PC-3 (cell line): ENCODE measurements at regions of chr7 and their contacts with region 1.

Region 1: GRCh38 chr7:116809636-116810266 is 52.6 kb upstream of the CAPZA2 start:
- DNase-seq: peak; percentile 87
- ATAC-seq: peak; percentile 82
- H3K4me3 ChIP-seq: peak overlapping the region; percentile 42
- H3K27ac ChIP-seq: peak overlapping the region; percentile 76
- H3K4me1 ChIP-seq: peaks cover 38% of the 10 kb centered on the region
- H3K27me3 ChIP-seq: no peaks in the 10 kb centered on the region
- CTCF ChIP-seq: peak; percentile 85

Region 2: GRCh38 chr7:116195451-116195850 is 614.3 kb before region 1 on chr7:
- CTCF ChIA-PET with region 1: no interaction called
- POLR2A ChIA-PET with region 1: no interaction called
- intact Hi-C with region 1: no loop called
- DNase-seq: no peak
- ATAC-seq: no peak
- H3K4me3 ChIP-seq: no peak overlapping the region
- H3K27ac ChIP-seq: no peak overlapping the region
- H3K4me1 ChIP-seq: no peaks in the 10 kb centered on the region
- H3K27me3 ChIP-seq: no peaks in the 10 kb centered on the region
- CTCF ChIP-seq: no peak

Region 3: DNA sequence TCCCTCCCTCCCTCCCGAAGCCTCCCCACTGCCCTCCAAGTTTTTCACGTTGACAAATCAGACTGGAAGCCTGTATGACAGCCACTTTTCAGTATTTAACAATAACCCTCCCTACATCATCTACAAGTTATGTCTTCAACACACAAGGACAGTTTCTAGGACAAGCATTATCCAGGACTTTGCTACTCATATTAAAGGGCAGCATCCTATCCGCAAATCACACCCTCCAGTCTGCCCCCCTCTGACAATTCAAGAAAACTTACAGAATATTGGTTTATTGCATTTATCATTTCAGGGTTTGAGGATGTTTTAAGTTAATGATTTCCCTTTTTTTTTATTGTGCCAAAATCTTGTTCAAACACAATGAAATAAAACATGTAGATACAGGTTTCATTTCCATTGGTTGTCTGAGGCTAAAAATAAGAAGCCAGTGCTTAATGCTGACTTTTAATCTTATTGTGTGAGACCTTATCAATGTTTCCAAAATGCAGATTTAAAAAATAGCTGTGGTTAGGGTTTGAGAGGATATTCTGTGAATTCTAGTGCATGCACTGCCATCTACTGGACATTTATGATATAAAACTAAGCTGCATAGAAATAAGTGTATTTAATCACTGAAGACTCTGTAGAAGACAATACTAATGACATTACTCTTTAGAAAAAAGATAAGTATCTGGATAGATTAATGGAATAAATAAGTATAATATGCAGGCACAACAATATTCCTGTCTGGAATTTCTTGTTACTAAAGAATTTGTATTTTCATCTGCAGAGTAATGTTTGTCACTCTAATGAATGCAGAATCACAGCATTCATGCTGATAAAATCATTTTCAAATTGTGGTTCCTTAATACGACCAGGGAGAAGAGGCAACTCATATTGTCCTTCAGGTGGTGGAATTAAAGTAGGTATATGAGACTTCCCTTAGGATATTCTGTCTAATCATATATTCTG is 220.8 kb before region 1 on chr7:
- CTCF ChIA-PET with region 1: interaction called, 9 read pairs
- POLR2A ChIA-PET with region 1: no interaction called
- intact Hi-C with region 1: loop called (anchors 1 kb)
- DNase-seq: peak; percentile 88
- ATAC-seq: peak; percentile 49
- H3K4me3 ChIP-seq: no peak overlapping the region
- H3K27ac ChIP-seq: peak overlapping the region; percentile 3; the same call in 1 of the 2 replicates
- H3K4me1 ChIP-seq: peaks cover 26% of the 10 kb centered on the region
- H3K27me3 ChIP-seq: no peaks in the 10 kb centered on the region
- CTCF ChIP-seq: peak; percentile 87

Region 4: GRCh38 chr7:116862234-116862950 is 52.6 kb after region 1 on chr7 and contains the start of gene CAPZA2:
- CTCF ChIA-PET with region 1: no interaction called
- POLR2A ChIA-PET with region 1: no interaction called
- intact Hi-C with region 1: loop called (anchors 1 kb)
- DNase-seq: peak; percentile 94
- ATAC-seq: peak; percentile 89
- H3K4me3 ChIP-seq: peak within 1 kb of the TSS; percentile 88
- H3K27ac ChIP-seq: peak within 1 kb of the TSS; percentile 63
- H3K4me1 ChIP-seq: peaks cover 16% of the 10 kb centered on the region
- H3K27me3 ChIP-seq: no peaks in the 10 kb centered on the region
- CTCF ChIP-seq: no peak
- total RNA-seq, gene CAPZA2: 27.7 and 57.7 TPM in 2 replicates

Region 5: DNA sequence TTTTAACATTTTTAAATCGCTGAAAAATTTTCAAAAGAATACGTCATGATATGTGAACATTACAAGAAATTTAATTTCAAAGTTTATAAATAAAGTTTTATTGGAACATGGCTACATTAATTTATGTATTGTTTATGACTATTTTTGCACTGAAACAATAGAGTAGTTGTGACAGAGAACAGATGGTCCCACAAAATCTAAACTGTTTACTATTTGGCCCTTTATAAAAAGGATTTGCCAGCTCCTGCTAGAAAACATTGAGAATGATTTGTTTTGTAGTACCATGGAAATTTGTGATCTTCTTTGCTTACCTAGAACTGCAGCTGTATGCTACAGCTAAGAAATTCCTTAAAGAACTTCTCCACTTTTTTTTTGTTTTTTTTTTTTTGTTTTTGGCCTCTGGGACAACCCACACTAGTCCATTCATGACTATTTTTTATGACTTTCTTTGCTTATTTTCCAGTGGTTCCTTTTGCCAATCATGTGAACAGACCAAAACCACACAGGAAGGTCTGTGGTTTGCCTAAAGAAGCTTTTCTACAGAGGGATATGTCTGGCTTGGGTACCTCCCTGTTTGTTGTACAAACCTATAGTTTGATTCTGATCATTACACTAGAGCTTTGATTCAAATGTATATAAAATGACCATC is 199.3 kb after region 1 on chr7:
- CTCF ChIA-PET with region 1: no interaction called
- POLR2A ChIA-PET with region 1: no interaction called
- intact Hi-C with region 1: no loop called
- DNase-seq: peak; percentile 71
- ATAC-seq: peak; percentile 79
- H3K4me3 ChIP-seq: no peak overlapping the region
- H3K27ac ChIP-seq: peak overlapping the region; percentile 37
- H3K4me1 ChIP-seq: peaks cover 24% of the 10 kb centered on the region
- H3K27me3 ChIP-seq: no peaks in the 10 kb centered on the region
- CTCF ChIP-seq: no peak